GM12878 (cell line): ENCODE measurements at regions of chr6 and their contacts with region 1.

Region 1: GRCh38 chr6:64266351-64266821 is 630.8 kb downstream of the PHF3 start:
- DNase-seq: peak; percentile 79
- ATAC-seq: peak; percentile 96
- H3K4me3 ChIP-seq: no peak overlapping the region
- H3K27ac ChIP-seq: peak overlapping the region; percentile 50; the same call in 1 of the 2 replicates
- H3K4me1 ChIP-seq: peaks cover 18% of the 10 kb centered on the region
- H3K27me3 ChIP-seq: no peaks in the 10 kb centered on the region
- CTCF ChIP-seq: no peak
- EP300 ChIP-seq: peak; percentile 83 to 88; a peak in 3 of 4 replicates
- POLR2A ChIP-seq: no peak
- RAD21 ChIP-seq: no peak

Region 2: DNA sequence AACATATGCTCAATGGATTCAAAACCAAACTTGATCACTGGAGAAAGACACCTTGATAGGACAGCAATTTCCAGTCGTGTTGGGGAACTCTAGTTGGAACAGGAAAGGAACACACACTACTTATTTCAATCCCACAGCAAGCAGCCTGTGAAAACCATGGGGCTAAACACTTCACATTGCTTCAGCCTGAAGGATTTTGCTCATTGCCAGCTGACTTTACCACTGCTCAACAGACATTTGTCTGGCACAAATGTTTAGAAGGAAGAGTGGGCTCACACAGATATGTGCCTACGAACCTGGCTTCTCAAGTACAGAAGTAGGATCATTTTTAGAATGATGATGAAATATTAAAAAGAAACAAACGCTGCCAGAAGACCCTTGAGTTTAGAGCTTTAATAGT is 32.6 kb before region 1 on chr6:
- CTCF ChIA-PET with region 1: interaction called, 3 read pairs
- POLR2A ChIA-PET with region 1: no interaction called
- RAD21 ChIA-PET with region 1: no interaction called
- SMC1A ChIA-PET with region 1: interaction called, 4 read pairs
- in situ Hi-C with region 1: no loop called
- intact Hi-C with region 1: loop called (anchors 2 kb)
- DNase-seq: no peak
- ATAC-seq: peak; percentile 39
- H3K4me3 ChIP-seq: no peak overlapping the region
- H3K27ac ChIP-seq: no peak overlapping the region
- H3K4me1 ChIP-seq: no peaks in the 10 kb centered on the region
- H3K27me3 ChIP-seq: no peaks in the 10 kb centered on the region
- CTCF ChIP-seq: no peak
- EP300 ChIP-seq: no peak
- POLR2A ChIP-seq: no peak
- RAD21 ChIP-seq: no peak

Region 3: DNA sequence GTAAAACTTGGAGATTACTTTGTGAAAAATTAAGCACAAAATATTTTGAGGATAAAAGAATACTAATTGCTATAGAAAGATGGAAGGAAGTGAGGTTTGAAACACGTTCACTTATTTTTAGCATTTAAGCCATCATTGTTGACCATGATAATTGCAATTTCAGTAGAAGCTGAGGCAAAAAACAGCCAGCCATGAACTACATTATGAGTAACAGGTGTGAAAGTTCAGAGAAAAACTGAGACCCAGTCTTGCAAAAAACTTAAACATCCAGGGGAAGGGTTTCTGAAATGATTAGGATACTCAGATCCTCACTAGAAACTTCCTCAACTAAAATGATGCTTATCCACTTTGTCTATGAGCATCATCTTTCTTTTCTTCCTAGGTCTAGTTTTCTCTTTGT is 11.4 kb before region 1 on chr6:
- CTCF ChIA-PET with region 1: interaction called, 7 read pairs
- POLR2A ChIA-PET with region 1: interaction called, 4 read pairs
- RAD21 ChIA-PET with region 1: interaction called, 7 read pairs
- SMC1A ChIA-PET with region 1: interaction called, 17 read pairs
- in situ Hi-C with region 1: no loop called
- intact Hi-C with region 1: no loop called
- DNase-seq: no peak
- ATAC-seq: peak; percentile 65
- H3K4me3 ChIP-seq: no peak overlapping the region
- H3K27ac ChIP-seq: no peak overlapping the region
- H3K4me1 ChIP-seq: no peaks in the 10 kb centered on the region
- H3K27me3 ChIP-seq: no peaks in the 10 kb centered on the region
- CTCF ChIP-seq: no peak
- EP300 ChIP-seq: no peak
- POLR2A ChIP-seq: no peak
- RAD21 ChIP-seq: no peak

Region 4: DNA sequence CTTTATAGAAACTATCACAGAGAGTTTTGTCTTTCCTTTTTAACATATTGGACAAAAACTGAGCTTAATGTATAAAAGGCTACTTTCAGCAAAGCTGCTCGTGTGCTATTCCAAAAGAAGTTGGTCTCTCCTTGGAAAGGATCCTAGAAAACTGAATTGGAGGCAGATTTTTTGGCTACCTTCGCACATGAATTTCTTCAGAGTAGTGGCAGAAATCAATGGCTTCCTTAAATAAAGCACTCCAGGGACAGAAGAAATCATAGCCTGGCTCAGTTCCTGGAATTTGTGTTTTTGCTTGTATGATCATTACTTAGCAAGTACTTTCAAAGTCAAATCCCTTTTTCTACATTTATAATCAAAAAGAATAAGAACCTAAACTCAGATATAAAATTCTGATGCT is 149.5 kb after region 1 on chr6:
- CTCF ChIA-PET with region 1: no interaction called
- POLR2A ChIA-PET with region 1: no interaction called
- RAD21 ChIA-PET with region 1: no interaction called
- SMC1A ChIA-PET with region 1: no interaction called
- in situ Hi-C with region 1: no loop called
- intact Hi-C with region 1: no loop called
- DNase-seq: no peak
- ATAC-seq: no peak
- H3K4me3 ChIP-seq: no peak overlapping the region
- H3K27ac ChIP-seq: no peak overlapping the region
- H3K4me1 ChIP-seq: no peaks in the 10 kb centered on the region
- H3K27me3 ChIP-seq: no peaks in the 10 kb centered on the region
- CTCF ChIP-seq: no peak
- EP300 ChIP-seq: no peak
- POLR2A ChIP-seq: no peak
- RAD21 ChIP-seq: no peak

Region 5: GRCh38 chr6:64672131-64672530 is 405.7 kb after region 1 on chr6:
- CTCF ChIA-PET with region 1: no interaction called
- POLR2A ChIA-PET with region 1: no interaction called
- RAD21 ChIA-PET with region 1: no interaction called
- SMC1A ChIA-PET with region 1: no interaction called
- in situ Hi-C with region 1: no loop called
- intact Hi-C with region 1: no loop called
- DNase-seq: no peak
- ATAC-seq: no peak
- H3K4me3 ChIP-seq: no peak overlapping the region
- H3K27ac ChIP-seq: no peak overlapping the region
- H3K4me1 ChIP-seq: no peaks in the 10 kb centered on the region
- H3K27me3 ChIP-seq: no peaks in the 10 kb centered on the region
- CTCF ChIP-seq: no peak
- EP300 ChIP-seq: no peak
- POLR2A ChIP-seq: no peak
- RAD21 ChIP-seq: no peak